GM23248 (cell line): ENCODE measurements at regions of chr13 and their contacts with region 1.

Region 1: GRCh38 chr13:44620057-44620456 is 43.9 kb upstream of the TSC22D1 start:
- DNase-seq: peak; percentile 70
- H3K4me3 ChIP-seq: no peak overlapping the region
- H3K27ac ChIP-seq: no peak overlapping the region
- H3K4me1 ChIP-seq: peaks cover 10% of the 10 kb centered on the region
- H3K27me3 ChIP-seq: no peaks in the 10 kb centered on the region

Region 2: DNA sequence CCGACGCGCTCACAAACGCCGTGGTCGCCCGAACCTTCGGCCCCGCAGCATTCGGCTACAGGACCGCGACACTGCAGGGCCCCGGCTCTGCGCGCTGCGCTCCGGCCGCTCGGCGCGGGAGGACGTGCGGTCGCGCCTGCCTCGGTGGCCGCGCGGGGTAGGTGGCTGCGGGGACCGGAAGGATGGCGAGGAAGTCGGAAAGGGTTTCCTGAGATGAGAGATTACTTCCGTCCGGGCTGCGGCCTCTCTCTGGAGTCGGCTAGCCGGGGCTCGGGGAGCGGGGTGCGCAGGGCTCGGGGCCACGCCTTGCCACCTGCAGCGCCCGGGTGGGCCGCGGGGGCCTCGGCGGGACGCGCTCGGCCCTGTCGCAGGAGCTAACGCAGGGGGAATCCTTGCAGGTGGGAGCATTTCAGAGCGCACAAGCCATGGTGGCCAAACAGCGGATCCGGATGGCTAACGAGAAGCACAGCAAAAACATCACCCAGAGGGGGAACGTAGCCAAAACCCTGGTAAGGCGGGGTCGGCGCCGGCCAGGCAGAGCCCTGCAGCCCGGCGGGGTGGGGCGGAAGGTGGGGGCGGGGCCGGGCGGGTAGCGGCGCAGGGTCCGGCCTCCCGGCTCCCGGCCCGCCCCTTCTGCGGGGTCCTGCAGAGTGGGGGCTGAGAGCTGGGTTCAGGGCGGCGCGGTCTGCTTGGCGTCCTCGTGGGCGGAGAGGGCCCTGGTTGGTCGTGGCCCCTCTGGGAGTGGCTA is 246.3 kb before region 1 on chr13 and contains the start of gene SERP2:
- in situ Hi-C with region 1: no loop called
- DNase-seq: peak; percentile 43
- H3K4me3 ChIP-seq: peak within 1 kb of the TSS; percentile 76
- H3K27ac ChIP-seq: no peak within 1 kb of the TSS
- H3K4me1 ChIP-seq: no peaks in the 10 kb centered on the region
- H3K27me3 ChIP-seq: no peaks in the 10 kb centered on the region
- total RNA-seq, gene SERP2: 2.8 and 5.6 TPM in 2 replicates

Region 3: DNA sequence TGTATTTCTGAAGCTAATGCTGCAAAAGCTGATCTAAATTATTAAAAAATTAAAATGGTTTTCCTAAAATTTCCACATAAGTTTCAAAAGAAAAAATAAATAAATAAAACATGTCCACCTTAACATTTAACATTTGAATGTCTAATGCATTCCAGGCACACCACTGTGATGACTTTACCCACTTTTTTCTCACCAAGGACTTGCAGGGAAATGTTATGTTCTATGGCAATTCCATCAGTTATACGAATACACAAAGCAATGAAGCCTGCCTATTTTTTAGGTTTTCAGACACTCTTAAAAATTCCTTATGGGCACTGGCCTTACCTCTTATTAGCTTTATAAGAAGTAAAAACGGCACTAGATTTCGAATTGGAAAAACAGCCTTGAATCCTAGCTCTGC is 54.2 kb before region 1 on chr13:
- in situ Hi-C with region 1: loop called (anchors 10 kb)
- DNase-seq: peak; percentile 30
- H3K4me3 ChIP-seq: peak overlapping the region; percentile 4; the same call in 1 of the 2 replicates
- H3K27ac ChIP-seq: no peak overlapping the region; the same call in 1 of the 2 replicates
- H3K4me1 ChIP-seq: peaks cover 29% of the 10 kb centered on the region
- H3K27me3 ChIP-seq: no peaks in the 10 kb centered on the region

Region 4: GRCh38 chr13:45063261-45063860 is 443.3 kb after region 1 on chr13:
- in situ Hi-C with region 1: no loop called
- DNase-seq: peak; percentile 84
- H3K4me3 ChIP-seq: no peak overlapping the region
- H3K27ac ChIP-seq: no peak overlapping the region
- H3K4me1 ChIP-seq: peaks cover 5% of the 10 kb centered on the region; the same call in 1 of the 2 replicates
- H3K27me3 ChIP-seq: no peaks in the 10 kb centered on the region